WTC11 (cell line): ENCODE measurements at regions of chr12 and their contacts with region 1.

Region 1: DNA sequence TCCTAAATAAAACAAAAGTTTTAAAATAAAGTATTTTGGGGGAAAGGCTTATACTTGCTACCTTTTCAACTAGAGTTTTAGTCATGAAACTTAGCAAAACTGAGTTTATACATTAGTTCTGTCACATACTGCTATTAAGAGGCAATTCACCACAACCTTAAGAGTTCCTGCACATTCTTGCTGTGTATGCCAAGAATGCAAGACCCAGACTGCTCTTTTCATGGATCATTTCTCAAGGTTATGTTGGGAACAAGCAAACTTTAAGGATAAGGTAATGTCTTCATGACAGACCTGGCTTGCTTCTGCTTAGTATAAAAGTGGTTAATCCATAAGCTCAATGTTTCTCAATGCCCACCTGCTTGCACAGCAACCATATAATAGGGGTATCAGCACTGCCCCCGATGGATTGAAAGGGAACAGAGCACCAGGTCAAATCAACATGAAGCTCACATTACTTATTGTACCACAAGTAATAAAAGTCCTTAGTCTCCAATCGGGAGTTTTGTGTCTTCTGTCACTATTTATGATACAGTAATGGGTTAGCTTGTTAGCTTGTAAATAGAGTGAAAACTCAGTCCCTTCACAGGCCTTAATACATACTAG is 67.6 kb downstream of the KIF21A start:
- DNase-seq: peak; percentile 17
- ATAC-seq: peak; percentile 82
- H3K4me3 Mint-ChIP-seq: no peak overlapping the region
- H3K27ac Mint-ChIP-seq: no peak overlapping the region
- H3K4me1 Mint-ChIP-seq: peaks cover 48% of the 10 kb centered on the region
- H3K27me3 Mint-ChIP-seq: no peaks in the 10 kb centered on the region
- CTCF ChIP-seq: no peak

Region 2: GRCh38 chr12:39392154-39392925 is 17.0 kb after region 1 on chr12:
- CTCF ChIA-PET with region 1: interaction called, 18 read pairs
- POLR2A ChIA-PET with region 1: interaction called, 3 read pairs
- DNase-seq: no peak
- ATAC-seq: no peak
- H3K4me3 Mint-ChIP-seq: no peak overlapping the region
- H3K27ac Mint-ChIP-seq: peak overlapping the region; percentile 71
- H3K4me1 Mint-ChIP-seq: peaks cover 72% of the 10 kb centered on the region
- H3K27me3 Mint-ChIP-seq: no peaks in the 10 kb centered on the region; the same call in 1 of the 2 replicates
- CTCF ChIP-seq: no peak

Region 3: GRCh38 chr12:39443081-39443928 is 68.0 kb after region 1 on chr12 and contains the start of gene KIF21A:
- CTCF ChIA-PET with region 1: interaction called, 10 read pairs
- POLR2A ChIA-PET with region 1: no interaction called
- DNase-seq: peak; percentile 84
- ATAC-seq: peak; percentile 91
- H3K4me3 Mint-ChIP-seq: peak within 1 kb of the TSS; percentile 90
- H3K27ac Mint-ChIP-seq: no peak within 1 kb of the TSS; the same call in 1 of the 2 replicates
- H3K4me1 Mint-ChIP-seq: peaks cover 46% of the 10 kb centered on the region
- H3K27me3 Mint-ChIP-seq: peaks cover 10% of the 10 kb centered on the region; the same call in 1 of the 2 replicates
- CTCF ChIP-seq: peak; percentile 36; the same call in 1 of the 2 replicates
- total RNA-seq, gene KIF21A: 24.5 to 34.7 TPM (median 26.4 TPM) in 3 replicates